B cell (primary cell): ENCODE measurements at regions of chr3 and their contacts with region 1.

Region 1: GRCh38 chr3:108221911-108222852 is at the start of gene IFT57:
- DNase-seq: peak; percentile 99
- ATAC-seq: peak; percentile 91
- H3K4me3 ChIP-seq: peak within 1 kb of the TSS; percentile 84 to 92 (median 85)
- H3K4me3 Mint-ChIP-seq: peak within 1 kb of the TSS; percentile 99
- H3K27ac ChIP-seq: peak within 1 kb of the TSS; percentile 93 to 96
- H3K27ac Mint-ChIP-seq: peak within 1 kb of the TSS; percentile 95
- H3K4me1 ChIP-seq: peaks cover 31 to 45% of the 10 kb centered on the region in 2 donors
- H3K4me1 Mint-ChIP-seq: peaks cover 59% of the 10 kb centered on the region
- H3K27me3 ChIP-seq: no peaks in the 10 kb centered on the region
- H3K27me3 Mint-ChIP-seq: no peaks in the 10 kb centered on the region
- CTCF ChIP-seq: no peak
- total RNA-seq, gene IFT57: 90.5 and 94.4 TPM in 2 replicates

Region 2: DNA sequence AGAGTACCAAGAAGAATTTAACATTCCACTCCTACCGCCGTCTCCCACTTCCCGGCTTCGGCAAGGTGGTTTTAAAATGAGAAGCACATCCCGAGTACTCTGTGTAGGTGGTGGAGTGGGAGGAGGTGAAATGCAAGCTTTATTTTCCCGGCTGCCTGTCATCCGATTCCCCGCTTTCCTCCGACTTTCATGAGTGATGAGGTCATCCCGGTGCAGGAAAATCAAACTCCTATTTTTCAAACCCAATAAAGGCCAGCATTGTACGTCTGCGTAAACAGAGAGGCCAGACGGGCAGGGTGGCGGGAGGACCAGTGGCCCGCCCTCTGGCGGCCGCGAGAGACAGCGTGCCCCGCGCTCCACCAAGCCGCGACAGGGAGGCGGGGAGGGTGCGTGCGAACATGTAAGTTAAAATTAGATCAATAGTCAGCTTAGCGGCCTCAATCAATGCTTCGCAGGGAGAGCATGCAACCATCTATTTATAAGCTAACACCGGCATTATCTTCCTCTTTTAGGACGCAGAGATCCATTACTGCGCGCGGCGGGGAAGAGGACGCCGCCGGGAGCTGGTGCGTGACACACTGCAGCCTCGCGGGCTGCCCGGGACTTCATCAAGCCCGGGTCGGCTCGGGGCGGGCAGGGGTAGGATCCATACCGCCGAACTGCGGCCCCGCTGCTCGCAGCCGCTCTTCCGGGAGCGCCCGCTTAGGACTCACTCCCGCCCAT is 294.7 kb before region 1 on chr3:
- CTCF ChIA-PET with region 1: interaction called, 15 read pairs
- POLR2A ChIA-PET with region 1: no interaction called
- intact Hi-C with region 1: loop called (anchors 5 kb)
- DNase-seq: peak; percentile 77
- ATAC-seq: peak; percentile 93
- H3K4me3 ChIP-seq: peak overlapping the region; percentile 48 to 67 (median 58)
- H3K4me3 Mint-ChIP-seq: peak overlapping the region; percentile 93
- H3K27ac ChIP-seq: no peak overlapping the region
- H3K27ac Mint-ChIP-seq: peak overlapping the region; percentile 54
- H3K4me1 ChIP-seq: peaks cover 12 to 18% of the 10 kb centered on the region in 2 donors
- H3K4me1 Mint-ChIP-seq: peaks cover 15% of the 10 kb centered on the region
- H3K27me3 ChIP-seq: peaks cover 0 to 30% (median 8%) of the 10 kb centered on the region in 4 experiments
- H3K27me3 Mint-ChIP-seq: peaks cover 9% of the 10 kb centered on the region
- CTCF ChIP-seq: peak; percentile 86

Region 3: DNA sequence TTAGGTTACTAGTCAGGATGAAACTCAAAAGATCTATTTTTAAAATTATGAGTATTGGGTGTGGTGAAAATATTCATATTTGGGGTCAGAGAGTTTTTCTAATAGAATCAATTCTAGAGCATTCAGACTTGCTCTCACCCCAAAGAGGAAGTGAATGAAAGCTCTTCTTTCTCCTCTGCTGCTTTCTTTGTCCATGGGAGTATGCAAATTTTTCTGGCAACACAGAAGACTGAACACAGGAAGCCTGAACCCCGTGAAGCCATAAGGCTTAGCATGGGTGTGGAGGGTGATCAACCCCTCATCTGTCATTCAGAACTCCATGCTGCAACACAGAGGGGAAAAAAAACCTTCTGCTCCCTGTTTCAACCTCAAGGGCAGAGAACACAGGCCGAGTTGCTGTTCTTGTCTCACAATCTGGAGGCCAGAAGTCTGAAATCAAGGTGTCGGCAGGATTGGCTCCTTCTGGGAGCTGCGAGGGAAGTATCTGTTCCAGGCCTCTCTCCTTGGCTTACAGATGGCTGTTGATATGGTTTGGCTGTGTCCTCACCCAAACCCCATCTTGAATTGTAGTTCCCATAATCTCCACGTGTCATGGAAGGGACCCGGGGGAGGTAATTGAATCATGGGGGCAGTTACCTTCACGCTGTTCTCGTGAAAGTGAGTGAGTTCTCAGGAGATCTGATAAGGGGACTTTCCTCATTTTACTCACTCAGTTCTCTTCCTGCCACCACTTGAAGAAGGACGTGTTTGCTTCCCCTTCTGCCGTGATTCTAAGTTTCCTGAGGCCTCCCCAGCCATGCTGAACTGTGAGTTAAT is 97.6 kb before region 1 on chr3:
- CTCF ChIA-PET with region 1: interaction called, 13 read pairs
- POLR2A ChIA-PET with region 1: interaction called, 19 read pairs
- intact Hi-C with region 1: loop called (anchors 1 kb)
- DNase-seq: peak; percentile 94
- ATAC-seq: peak; percentile 64
- H3K4me3 ChIP-seq: peak overlapping the region; percentile 61 to 94 (median 83)
- H3K4me3 Mint-ChIP-seq: peak overlapping the region; percentile 92
- H3K27ac ChIP-seq: peak overlapping the region; percentile 97 to 99
- H3K27ac Mint-ChIP-seq: peak overlapping the region; percentile 95
- H3K4me1 ChIP-seq: peaks cover 78 to 82% of the 10 kb centered on the region in 2 donors
- H3K4me1 Mint-ChIP-seq: peaks cover 77% of the 10 kb centered on the region
- H3K27me3 ChIP-seq: no peaks in the 10 kb centered on the region
- H3K27me3 Mint-ChIP-seq: no peaks in the 10 kb centered on the region
- CTCF ChIP-seq: no peak

Region 4: DNA sequence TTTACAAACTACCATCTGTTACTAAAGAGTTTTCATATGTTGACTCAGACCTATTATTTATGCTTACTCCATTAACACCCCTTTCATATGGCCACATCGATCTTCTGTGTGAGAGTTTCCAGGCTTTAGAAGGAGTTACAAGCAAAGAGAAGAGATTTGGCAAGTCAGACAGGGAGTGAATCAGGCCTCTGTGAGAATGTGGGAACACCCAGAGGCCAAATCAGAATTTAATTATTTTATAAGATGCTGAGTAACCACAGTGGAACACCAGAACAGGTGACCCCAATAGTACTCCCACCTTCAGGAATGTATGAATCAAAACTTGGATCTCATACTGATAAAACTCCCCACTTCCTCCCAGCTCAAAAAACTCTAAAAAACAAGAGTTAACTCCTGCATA is 42.0 kb before region 1 on chr3:
- CTCF ChIA-PET with region 1: no interaction called
- POLR2A ChIA-PET with region 1: no interaction called
- intact Hi-C with region 1: loop called (anchors 5 kb)
- DNase-seq: no peak
- ATAC-seq: no peak
- H3K4me3 ChIP-seq: no peak overlapping the region
- H3K4me3 Mint-ChIP-seq: no peak overlapping the region
- H3K27ac ChIP-seq: no peak overlapping the region
- H3K27ac Mint-ChIP-seq: no peak overlapping the region
- H3K4me1 ChIP-seq: peaks cover 0 to 11% of the 10 kb centered on the region in 2 donors
- H3K4me1 Mint-ChIP-seq: peaks cover 47% of the 10 kb centered on the region
- H3K27me3 ChIP-seq: no peaks in the 10 kb centered on the region
- H3K27me3 Mint-ChIP-seq: no peaks in the 10 kb centered on the region
- CTCF ChIP-seq: no peak

Region 5: GRCh38 chr3:108190346-108190745 is 31.8 kb before region 1 on chr3:
- CTCF ChIA-PET with region 1: no interaction called
- POLR2A ChIA-PET with region 1: no interaction called
- intact Hi-C with region 1: no loop called
- DNase-seq: no peak
- ATAC-seq: no peak
- H3K4me3 ChIP-seq: no peak overlapping the region
- H3K4me3 Mint-ChIP-seq: no peak overlapping the region
- H3K27ac ChIP-seq: no peak overlapping the region
- H3K27ac Mint-ChIP-seq: no peak overlapping the region
- H3K4me1 ChIP-seq: no peaks in the 10 kb centered on the region
- H3K4me1 Mint-ChIP-seq: peaks cover 8% of the 10 kb centered on the region
- H3K27me3 ChIP-seq: no peaks in the 10 kb centered on the region
- H3K27me3 Mint-ChIP-seq: no peaks in the 10 kb centered on the region
- CTCF ChIP-seq: no peak

Region 6: DNA sequence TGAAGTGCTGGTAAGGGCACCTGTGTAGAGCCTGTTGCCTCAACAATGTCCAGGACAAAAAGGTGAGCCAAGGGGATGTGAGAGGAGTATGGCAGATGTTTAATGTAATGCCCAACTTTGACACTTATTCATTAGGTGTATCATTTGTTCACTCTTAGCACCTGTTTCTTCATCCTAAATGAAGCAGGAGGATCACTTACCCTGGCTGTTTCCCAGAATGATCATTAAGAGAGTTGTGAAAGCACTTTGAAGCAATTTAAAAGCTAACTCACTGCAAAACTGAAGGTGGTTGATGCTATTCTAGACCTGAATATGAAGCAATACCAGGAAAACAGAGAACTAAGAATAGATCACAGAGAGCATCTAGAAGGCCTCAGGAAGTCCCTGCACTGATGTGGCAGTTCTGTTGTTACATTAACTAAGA is 70.7 kb after region 1 on chr3:
- CTCF ChIA-PET with region 1: no interaction called
- POLR2A ChIA-PET with region 1: no interaction called
- intact Hi-C with region 1: loop called (anchors 5 kb)
- DNase-seq: no peak
- ATAC-seq: no peak
- H3K4me3 ChIP-seq: no peak overlapping the region
- H3K4me3 Mint-ChIP-seq: peak overlapping the region; percentile 20
- H3K27ac ChIP-seq: no peak overlapping the region
- H3K27ac Mint-ChIP-seq: peak overlapping the region; percentile 10
- H3K4me1 ChIP-seq: peaks cover 17 to 19% of the 10 kb centered on the region in 2 donors
- H3K4me1 Mint-ChIP-seq: peaks cover 38% of the 10 kb centered on the region
- H3K27me3 ChIP-seq: no peaks in the 10 kb centered on the region
- H3K27me3 Mint-ChIP-seq: no peaks in the 10 kb centered on the region
- CTCF ChIP-seq: no peak

Region 7: GRCh38 chr3:108406661-108407206 is 184.6 kb after region 1 on chr3:
- CTCF ChIA-PET with region 1: interaction called, 5 read pairs
- POLR2A ChIA-PET with region 1: no interaction called
- intact Hi-C with region 1: loop called (anchors 2 kb)
- DNase-seq: peak; percentile 78
- ATAC-seq: peak; percentile 75
- H3K4me3 ChIP-seq: peak overlapping the region in 1 of 5 experiments; percentile 3
- H3K4me3 Mint-ChIP-seq: peak overlapping the region; percentile 54
- H3K27ac ChIP-seq: peak overlapping the region; percentile 16 to 49
- H3K27ac Mint-ChIP-seq: peak overlapping the region; percentile 82
- H3K4me1 ChIP-seq: peaks cover 26 to 27% of the 10 kb centered on the region in 2 donors
- H3K4me1 Mint-ChIP-seq: peaks cover 31% of the 10 kb centered on the region
- H3K27me3 ChIP-seq: no peaks in the 10 kb centered on the region
- H3K27me3 Mint-ChIP-seq: no peaks in the 10 kb centered on the region
- CTCF ChIP-seq: peak; percentile 79

Region 8: GRCh38 chr3:108589146-108589997 is 367.2 kb after region 1 on chr3 and contains the starts of genes CIP2A and DZIP3:
- CTCF ChIA-PET with region 1: no interaction called
- POLR2A ChIA-PET with region 1: no interaction called
- intact Hi-C with region 1: loop called (anchors 5 kb)
- DNase-seq: peak; percentile 97
- ATAC-seq: peak; percentile 86
- H3K4me3 ChIP-seq: peak within 1 kb of the TSS; percentile 77 to 99 (median 94)
- H3K4me3 Mint-ChIP-seq: peak within 1 kb of the TSS; percentile 99
- H3K27ac ChIP-seq: peak within 1 kb of the TSS; percentile 96 to 99
- H3K27ac Mint-ChIP-seq: peak within 1 kb of the TSS; percentile 100
- H3K4me1 ChIP-seq: peaks cover 12 to 16% of the 10 kb centered on the region in 2 donors
- H3K4me1 Mint-ChIP-seq: peaks cover 17% of the 10 kb centered on the region
- H3K27me3 ChIP-seq: no peaks in the 10 kb centered on the region
- H3K27me3 Mint-ChIP-seq: no peaks in the 10 kb centered on the region
- CTCF ChIP-seq: no peak
- total RNA-seq, gene CIP2A: 8.8 and 11.0 TPM in 2 replicates
- total RNA-seq, gene DZIP3: 10.5 and 11.1 TPM in 2 replicates

Region 9: GRCh38 chr3:109241459-109242186 is 1019.4 kb after region 1 on chr3:
- CTCF ChIA-PET with region 1: no interaction called
- POLR2A ChIA-PET with region 1: no interaction called
- intact Hi-C with region 1: no loop called
- DNase-seq: no peak
- ATAC-seq: no peak
- H3K4me3 ChIP-seq: no peak overlapping the region
- H3K4me3 Mint-ChIP-seq: no peak overlapping the region
- H3K27ac ChIP-seq: no peak overlapping the region
- H3K27ac Mint-ChIP-seq: no peak overlapping the region
- H3K4me1 ChIP-seq: no peaks in the 10 kb centered on the region
- H3K4me1 Mint-ChIP-seq: no peaks in the 10 kb centered on the region
- H3K27me3 ChIP-seq: no peaks in the 10 kb centered on the region
- H3K27me3 Mint-ChIP-seq: no peaks in the 10 kb centered on the region
- CTCF ChIP-seq: no peak

Region 10: GRCh38 chr3:109346770-109347295 is 1124.7 kb after region 1 on chr3:
- CTCF ChIA-PET with region 1: no interaction called
- POLR2A ChIA-PET with region 1: no interaction called
- intact Hi-C with region 1: no loop called
- DNase-seq: no peak
- ATAC-seq: no peak
- H3K4me3 ChIP-seq: no peak overlapping the region
- H3K4me3 Mint-ChIP-seq: no peak overlapping the region
- H3K27ac ChIP-seq: no peak overlapping the region
- H3K27ac Mint-ChIP-seq: no peak overlapping the region
- H3K4me1 ChIP-seq: no peaks in the 10 kb centered on the region
- H3K4me1 Mint-ChIP-seq: no peaks in the 10 kb centered on the region
- H3K27me3 ChIP-seq: no peaks in the 10 kb centered on the region
- H3K27me3 Mint-ChIP-seq: no peaks in the 10 kb centered on the region
- CTCF ChIP-seq: no peak